Naive thymus-derived CD4-positive, alpha-beta T cell (primary cell): ENCODE measurements at regions of chr12 and their contacts with region 1.

Region 1: GRCh38 chr12:4276524-4277204 is 3.1 kb downstream of the CCND2 start:
- DNase-seq: peak; percentile 61 to 88 (median 87)
- ATAC-seq: peak; percentile 59
- H3K4me3 ChIP-seq: peak overlapping the region; percentile 85
- H3K4me3 Mint-ChIP-seq: peak overlapping the region; percentile 89 to 99 (median 95)
- H3K27ac ChIP-seq: peak overlapping the region; percentile 97
- H3K27ac Mint-ChIP-seq: peak overlapping the region; percentile 82 to 98 (median 96)
- H3K4me1 ChIP-seq: peaks cover 34 to 56% of the 10 kb centered on the region in 2 donors
- H3K4me1 Mint-ChIP-seq: peaks cover 41 to 66% (median 59%) of the 10 kb centered on the region in 7 donors
- H3K27me3 ChIP-seq: no peaks in the 10 kb centered on the region
- H3K27me3 Mint-ChIP-seq: peaks cover 0 to 2% (median 0%) of the 10 kb centered on the region in 5 donors

Region 2: DNA sequence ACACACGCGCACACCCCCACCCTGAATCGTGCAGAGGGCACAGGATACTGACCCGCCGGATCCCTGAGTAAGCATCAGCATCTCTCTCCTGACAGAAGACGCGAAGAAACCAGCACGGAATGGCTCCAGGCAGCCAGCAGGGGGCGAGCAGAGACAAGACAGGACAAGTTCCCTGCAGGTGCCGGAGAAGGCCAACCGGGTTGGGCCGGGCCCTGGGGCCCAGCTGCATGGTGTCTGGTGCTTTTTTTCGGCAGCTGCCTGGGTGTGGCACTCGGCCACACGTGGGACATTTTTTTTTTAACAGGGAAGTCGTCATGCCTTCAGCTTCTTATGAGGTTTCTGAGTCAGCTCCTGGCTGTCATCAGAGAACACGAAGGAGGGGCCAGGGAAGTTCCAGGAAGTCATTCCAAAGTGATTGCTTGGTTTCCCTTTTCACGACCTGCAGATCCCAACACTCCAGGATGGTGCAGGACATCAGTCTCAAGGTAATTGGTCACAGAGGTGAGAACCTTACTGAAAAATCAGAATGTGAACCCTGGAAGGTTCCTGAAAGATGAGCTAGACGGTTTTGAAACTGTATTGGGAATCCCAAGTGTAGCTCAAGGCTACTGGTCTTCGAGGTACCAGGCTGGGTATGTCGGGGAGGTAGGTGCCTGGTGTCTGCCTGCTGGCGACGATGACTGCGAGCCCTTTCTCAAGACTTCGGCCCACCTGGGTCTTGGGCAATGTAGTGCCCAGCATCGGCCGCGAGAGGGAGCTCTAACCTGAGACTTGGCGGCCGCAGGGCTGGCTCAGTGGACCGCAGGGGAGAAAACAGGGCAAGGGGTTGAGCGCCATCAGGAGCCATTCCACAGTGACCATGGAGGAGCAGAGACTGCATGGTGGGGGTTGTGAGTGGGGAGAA is 976.5 kb before region 1 on chr12:
- CTCF ChIA-PET with region 1: interaction called, 4 read pairs
- POLR2A ChIA-PET with region 1: no interaction called
- intact Hi-C with region 1: loop called in 1 of 2 experiments (anchors 2 kb)
- DNase-seq: peak; percentile 44 to 76 (median 68)
- ATAC-seq: peak; percentile 84
- H3K4me3 ChIP-seq: peak overlapping the region; percentile 19
- H3K4me3 Mint-ChIP-seq: peak overlapping the region; percentile 45 to 87 (median 78)
- H3K27ac ChIP-seq: no peak overlapping the region
- H3K27ac Mint-ChIP-seq: peak overlapping the region in 5 of 9 donors; percentile 34 to 85 (median 48)
- H3K4me1 ChIP-seq: peaks cover 7 to 9% of the 10 kb centered on the region in 2 donors
- H3K4me1 Mint-ChIP-seq: peaks cover 9 to 14% (median 12%) of the 10 kb centered on the region in 7 donors
- H3K27me3 ChIP-seq: no peaks in the 10 kb centered on the region
- H3K27me3 Mint-ChIP-seq: peaks cover 0 to 15% (median 6%) of the 10 kb centered on the region in 5 donors

Region 3: DNA sequence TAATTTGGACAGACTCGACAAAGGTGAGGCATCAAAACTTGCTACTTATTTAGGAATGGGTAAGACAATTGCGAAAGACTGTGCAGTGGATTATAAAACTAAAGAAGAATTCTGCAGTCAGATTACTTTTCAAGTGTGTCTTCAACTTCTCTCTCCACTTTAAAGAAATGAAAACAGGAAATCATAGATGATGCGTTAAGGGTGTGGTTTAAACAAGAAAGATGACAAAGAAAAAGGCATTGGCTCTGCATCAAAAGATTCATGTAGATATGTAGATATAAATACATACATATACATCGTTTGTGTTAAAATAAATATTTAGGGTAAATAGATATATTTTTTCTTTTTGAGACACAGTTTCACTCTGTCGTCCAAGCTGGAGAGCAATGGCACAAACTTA is 328.9 kb before region 1 on chr12:
- CTCF ChIA-PET with region 1: no interaction called
- POLR2A ChIA-PET with region 1: interaction called, 19 read pairs
- intact Hi-C with region 1: loop called in 1 of 2 experiments (anchors 1 kb)
- DNase-seq: peak in 7 of 9 donors; percentile 64 to 90 (median 82)
- ATAC-seq: peak; percentile 86
- H3K4me3 ChIP-seq: peak overlapping the region; percentile 2
- H3K4me3 Mint-ChIP-seq: peak overlapping the region in 9 of 10 donors; percentile 29 to 77 (median 63)
- H3K27ac ChIP-seq: peak overlapping the region; percentile 78
- H3K27ac Mint-ChIP-seq: peak overlapping the region; percentile 91 to 100 (median 98)
- H3K4me1 ChIP-seq: peaks cover 42 to 56% of the 10 kb centered on the region in 2 donors
- H3K4me1 Mint-ChIP-seq: peaks cover 45 to 78% (median 70%) of the 10 kb centered on the region in 7 donors
- H3K27me3 ChIP-seq: no peaks in the 10 kb centered on the region
- H3K27me3 Mint-ChIP-seq: peaks cover 0 to 17% (median 0%) of the 10 kb centered on the region in 5 donors

Region 4: GRCh38 chr12:4030929-4031702 is 245.5 kb before region 1 on chr12:
- CTCF ChIA-PET with region 1: interaction called, 7 read pairs
- POLR2A ChIA-PET with region 1: interaction called, 5 read pairs
- intact Hi-C with region 1: loop called in 1 of 2 experiments (anchors 1 kb)
- DNase-seq: peak; percentile 62 to 83 (median 74)
- ATAC-seq: peak; percentile 95
- H3K4me3 ChIP-seq: peak overlapping the region; percentile 50
- H3K4me3 Mint-ChIP-seq: peak overlapping the region; percentile 60 to 87 (median 84)
- H3K27ac ChIP-seq: peak overlapping the region; percentile 75
- H3K27ac Mint-ChIP-seq: peak overlapping the region in 8 of 9 donors; percentile 60 to 92 (median 86)
- H3K4me1 ChIP-seq: peaks cover 13 to 33% of the 10 kb centered on the region in 2 donors
- H3K4me1 Mint-ChIP-seq: peaks cover 22 to 54% (median 47%) of the 10 kb centered on the region in 7 donors
- H3K27me3 ChIP-seq: no peaks in the 10 kb centered on the region
- H3K27me3 Mint-ChIP-seq: peaks cover 0 to 33% (median 0%) of the 10 kb centered on the region in 5 donors

Region 5: DNA sequence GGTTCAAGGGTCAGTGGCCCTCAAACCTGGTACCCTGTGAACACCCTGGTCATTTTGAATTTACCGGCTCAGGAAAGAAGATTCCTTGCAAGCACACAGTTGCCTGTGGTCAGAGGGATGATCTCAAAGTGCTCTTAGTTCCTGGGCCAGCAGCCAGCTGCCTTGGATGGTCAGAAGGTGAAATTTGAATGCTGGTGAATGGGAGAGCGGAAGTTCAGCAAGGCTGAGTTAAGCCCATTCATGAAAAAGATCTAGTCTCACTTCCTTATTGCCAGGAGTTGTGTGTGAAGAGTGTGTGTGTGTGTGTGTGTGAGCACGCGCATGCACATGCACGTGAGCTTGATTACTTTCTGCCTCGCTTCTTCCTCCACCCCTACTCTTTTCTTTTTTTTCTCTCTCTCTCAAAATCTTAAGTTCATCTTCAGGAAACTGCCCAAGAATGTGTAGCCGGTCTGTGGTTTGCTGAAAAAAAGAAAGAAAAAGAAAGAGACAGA is 158.6 kb before region 1 on chr12:
- CTCF ChIA-PET with region 1: interaction called, 11 read pairs
- POLR2A ChIA-PET with region 1: no interaction called
- intact Hi-C with region 1: no loop called
- DNase-seq: peak in 6 of 9 donors; percentile 20 to 54 (median 32)
- ATAC-seq: peak; percentile 83
- H3K4me3 ChIP-seq: peak overlapping the region; percentile 17
- H3K4me3 Mint-ChIP-seq: peak overlapping the region; percentile 18 to 87 (median 78)
- H3K27ac ChIP-seq: no peak overlapping the region
- H3K27ac Mint-ChIP-seq: peak overlapping the region; percentile 22 to 86 (median 78)
- H3K4me1 ChIP-seq: peaks cover 29 to 30% of the 10 kb centered on the region in 2 donors
- H3K4me1 Mint-ChIP-seq: peaks cover 25 to 66% (median 44%) of the 10 kb centered on the region in 7 donors
- H3K27me3 ChIP-seq: no peaks in the 10 kb centered on the region
- H3K27me3 Mint-ChIP-seq: no peaks in the 10 kb centered on the region

Region 6: GRCh38 chr12:4246116-4246515 is 30.5 kb before region 1 on chr12:
- CTCF ChIA-PET with region 1: interaction called, 42 read pairs
- POLR2A ChIA-PET with region 1: interaction called, 7 read pairs
- intact Hi-C with region 1: loop called (anchors 1 to 2 kb)
- DNase-seq: no peak
- ATAC-seq: no peak
- H3K4me3 ChIP-seq: no peak overlapping the region
- H3K4me3 Mint-ChIP-seq: no peak overlapping the region
- H3K27ac ChIP-seq: no peak overlapping the region
- H3K27ac Mint-ChIP-seq: peak overlapping the region in 2 of 9 donors; percentile 16 to 65
- H3K4me1 ChIP-seq: peaks cover 0 to 4% of the 10 kb centered on the region in 2 donors
- H3K4me1 Mint-ChIP-seq: peaks cover 3 to 25% (median 6%) of the 10 kb centered on the region in 7 donors
- H3K27me3 ChIP-seq: no peaks in the 10 kb centered on the region
- H3K27me3 Mint-ChIP-seq: peaks cover 4 to 24% (median 6%) of the 10 kb centered on the region in 5 donors